ENCODE measurements at regions of chr18 and their contacts with region 1.

Region 1: GRCh38 chr18:54330768-54331548 is 26.7 kb downstream of the STARD6 start:
- DNase-seq: no peak
- ATAC-seq: peak; percentile 42; the same call in 2 of the 3 replicates
- H3K4me3 ChIP-seq: no peak overlapping the region
- H3K27ac ChIP-seq: no peak overlapping the region
- H3K4me1 ChIP-seq: no peaks in the 10 kb centered on the region
- H3K27me3 ChIP-seq: no peaks in the 10 kb centered on the region
- CTCF ChIP-seq: no peak; a peak in 1 of 6 replicates
- EP300 ChIP-seq: no peak
- POLR2A ChIP-seq: no peak
- RAD21 ChIP-seq: no peak

Region 2: DNA sequence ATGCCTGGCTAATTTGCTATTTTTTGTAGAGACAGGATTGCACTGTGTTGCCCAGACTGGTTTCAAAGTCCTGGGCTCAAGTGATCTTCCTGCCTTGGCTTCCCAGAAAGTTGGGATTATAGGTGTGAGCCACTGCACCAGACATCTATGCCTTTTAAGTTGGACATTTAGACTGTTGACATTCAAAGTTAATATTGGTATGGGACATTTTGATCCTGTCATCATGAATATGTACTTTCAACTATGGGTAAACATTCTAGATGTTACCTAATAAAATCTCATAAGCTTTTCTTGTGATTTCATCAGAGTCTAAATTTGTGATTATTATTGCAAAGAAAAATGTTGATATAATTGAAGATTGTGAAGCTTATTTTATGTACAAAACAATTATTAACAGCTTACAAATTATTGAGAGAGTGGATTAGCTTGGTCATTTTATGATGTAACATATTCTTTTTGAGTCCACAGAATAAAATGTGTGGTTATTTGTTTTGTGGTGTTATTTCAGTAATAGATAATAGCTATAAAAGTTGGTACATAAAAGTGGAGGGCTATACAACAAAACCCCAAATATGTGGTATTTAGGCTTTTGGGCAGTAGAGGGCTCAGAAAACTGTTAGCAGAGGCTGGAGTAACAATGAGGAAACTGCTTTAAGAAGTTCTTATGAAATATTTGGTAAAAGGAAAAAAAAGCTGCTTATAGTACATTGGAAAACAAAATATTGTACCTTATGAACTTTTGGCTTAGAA is 14.7 kb before region 1 on chr18:
- CTCF ChIA-PET with region 1: interaction called, 15 read pairs
- POLR2A ChIA-PET with region 1: no interaction called
- RAD21 ChIA-PET with region 1: no interaction called
- SMC1A ChIA-PET with region 1: interaction called, 4 read pairs
- in situ Hi-C with region 1: no loop called
- intact Hi-C with region 1: no loop called
- DNase-seq: no peak
- ATAC-seq: no peak
- H3K4me3 ChIP-seq: no peak overlapping the region
- H3K27ac ChIP-seq: no peak overlapping the region
- H3K4me1 ChIP-seq: no peaks in the 10 kb centered on the region
- H3K27me3 ChIP-seq: no peaks in the 10 kb centered on the region
- CTCF ChIP-seq: no peak
- EP300 ChIP-seq: no peak
- POLR2A ChIP-seq: no peak
- RAD21 ChIP-seq: no peak